AG04450 (cell line): ENCODE measurements at regions of chr19 and their contacts with region 1.

Region 1: DNA sequence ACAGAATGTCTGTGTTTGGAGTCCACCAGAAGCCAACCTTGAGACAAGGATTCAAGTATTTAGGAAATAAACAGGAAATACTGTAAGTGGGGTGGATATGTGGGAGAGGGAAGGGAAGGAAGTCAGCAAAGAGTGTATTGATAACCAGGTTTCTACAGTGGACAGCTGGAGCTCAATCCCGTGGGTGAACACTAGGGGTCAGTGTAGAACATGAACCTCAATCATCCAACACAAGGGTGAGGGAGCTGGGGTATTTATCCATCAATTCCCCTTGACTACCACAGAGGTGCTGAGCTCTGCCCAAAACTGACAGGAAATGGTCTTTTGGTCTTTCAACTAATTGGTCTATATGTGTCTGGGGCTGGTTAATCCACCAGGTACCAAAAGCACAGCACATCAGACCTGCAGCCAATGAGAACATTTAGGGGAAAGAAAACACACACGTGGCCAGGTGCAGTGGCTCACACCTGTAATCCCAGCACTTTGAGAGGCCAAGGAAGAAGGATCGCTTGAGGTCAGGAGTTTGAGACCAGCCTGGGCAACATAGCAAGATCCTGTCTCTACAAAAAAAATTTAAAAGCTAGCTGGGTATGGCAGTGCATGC is 5.6 kb upstream of the SYDE1 start:
- DNase-seq: no peak
- H3K4me3 ChIP-seq: no peak overlapping the region
- H3K27ac ChIP-seq: no peak overlapping the region
- H3K27me3 ChIP-seq: peaks cover 5% of the 10 kb centered on the region
- CTCF ChIP-seq: peak; percentile 67

Region 2: DNA sequence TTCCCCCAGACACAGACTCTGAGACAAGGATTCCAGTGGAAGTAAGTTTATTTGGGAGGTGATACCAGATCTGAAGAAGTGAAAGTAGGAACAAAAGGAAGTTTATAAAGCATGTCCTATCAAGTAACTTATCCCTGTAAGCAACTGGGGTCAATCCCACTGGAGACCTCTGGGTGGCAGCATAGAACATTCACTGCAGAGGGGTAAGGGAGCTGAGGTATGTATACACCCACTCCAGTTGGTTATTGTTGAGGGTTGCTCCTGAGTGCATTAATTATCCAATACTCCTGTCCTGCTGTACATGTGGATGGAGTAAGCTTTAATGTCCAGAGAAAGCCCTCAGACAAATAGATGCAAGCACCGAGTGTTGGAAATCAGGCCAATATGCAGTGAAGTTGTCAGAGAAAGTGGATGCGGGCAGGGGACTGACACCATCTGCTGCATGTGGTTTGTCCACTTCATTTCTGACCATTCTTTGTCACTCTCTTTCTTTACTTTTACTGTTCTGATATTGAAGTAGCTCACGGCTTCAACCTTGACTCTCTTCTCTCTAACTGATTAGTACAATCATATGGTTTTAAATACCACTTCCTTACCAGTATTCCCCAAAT is 52.5 kb after region 1 on chr19:
- CTCF ChIA-PET with region 1: interaction called, 24 read pairs
- POLR2A ChIA-PET with region 1: no interaction called
- DNase-seq: no peak
- H3K4me3 ChIP-seq: no peak overlapping the region
- H3K27ac ChIP-seq: no peak overlapping the region
- H3K27me3 ChIP-seq: peaks cover 6% of the 10 kb centered on the region
- CTCF ChIP-seq: peak; percentile 60

Region 3: DNA sequence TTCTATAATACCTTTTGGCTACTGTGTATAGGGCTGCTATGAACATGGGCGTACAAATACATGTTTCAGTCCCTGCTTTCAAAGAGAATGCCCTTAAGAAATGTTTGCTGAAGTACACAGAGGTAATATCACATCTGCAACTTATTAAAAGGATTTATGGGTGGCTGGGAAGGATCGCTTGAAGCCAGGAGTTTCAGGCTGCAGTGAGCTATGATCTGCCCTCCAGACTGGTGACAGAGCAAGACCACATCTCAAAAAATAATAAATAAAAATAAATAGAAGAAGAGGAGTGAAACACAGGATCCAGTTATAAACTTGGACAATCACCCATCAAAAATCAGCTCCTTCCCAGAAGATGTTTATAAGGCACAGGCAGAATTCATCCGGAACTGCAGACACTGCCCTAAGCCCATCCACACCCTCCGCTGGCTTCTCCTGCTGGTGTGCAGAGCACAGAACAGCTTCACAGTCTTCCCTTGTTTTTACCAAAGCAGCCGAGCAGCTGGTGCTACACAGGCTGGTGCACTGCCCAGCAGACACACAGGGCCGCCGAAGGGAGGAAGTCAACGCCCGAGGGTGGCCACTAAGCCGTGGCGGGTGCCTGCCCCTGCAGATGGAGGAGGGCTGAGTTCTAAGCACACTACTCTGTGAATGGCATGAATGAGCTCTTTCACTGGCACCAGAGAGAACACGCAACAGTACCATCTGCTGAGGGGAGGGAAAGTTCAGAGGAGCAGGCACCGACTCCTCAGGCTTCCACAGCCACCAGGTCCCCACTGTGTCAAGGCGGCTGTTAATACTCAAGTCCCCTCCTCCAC is 186.8 kb after region 1 on chr19:
- CTCF ChIA-PET with region 1: no interaction called
- POLR2A ChIA-PET with region 1: no interaction called
- DNase-seq: no peak
- H3K4me3 ChIP-seq: no peak overlapping the region
- H3K27ac ChIP-seq: no peak overlapping the region
- H3K27me3 ChIP-seq: no peaks in the 10 kb centered on the region
- CTCF ChIP-seq: 0 out of 2 replicates have a peak, but pooled peaks have one; percentile 4